Activated CD4-positive, alpha-beta T cell treated with anti-CD3 and anti-CD28 coated beads, Interleukin-2, amount 10 ng/mL, durations not matched to agents 24 days and 14 days (primary cell): ENCODE measurements at regions of chr9 and their contacts with region 1.

Region 1: GRCh38 chr9:112333639-112334431 is 416 bp upstream of the PTBP3 start:
- DNase-seq: peak; percentile 96
- H3K4me3 Mint-ChIP-seq: peak overlapping the region; percentile 92
- H3K27ac Mint-ChIP-seq: peak overlapping the region; percentile 99
- H3K4me1 Mint-ChIP-seq: peaks cover 28% of the 10 kb centered on the region
- H3K27me3 Mint-ChIP-seq: no peaks in the 10 kb centered on the region

Region 2: GRCh38 chr9:111661150-111661801 is 672.6 kb before region 1 on chr9 and contains the start of gene GNG10:
- intact Hi-C with region 1: loop called (anchors 1 kb)
- DNase-seq: peak; percentile 92
- H3K4me3 Mint-ChIP-seq: peak within 1 kb of the TSS; percentile 90
- H3K27ac Mint-ChIP-seq: peak within 1 kb of the TSS; percentile 97
- H3K4me1 Mint-ChIP-seq: peaks cover 28% of the 10 kb centered on the region
- H3K27me3 Mint-ChIP-seq: no peaks in the 10 kb centered on the region
- total RNA-seq, gene GNG10: 30.9 and 31.7 TPM in 2 replicates

Region 3: GRCh38 chr9:112180387-112180881 is 153.4 kb before region 1 on chr9:
- intact Hi-C with region 1: loop called (anchors 1 kb)
- DNase-seq: peak; percentile 88
- H3K4me3 Mint-ChIP-seq: peak overlapping the region; percentile 72
- H3K27ac Mint-ChIP-seq: peak overlapping the region; percentile 88
- H3K4me1 Mint-ChIP-seq: peaks cover 54% of the 10 kb centered on the region
- H3K27me3 Mint-ChIP-seq: peaks cover 9% of the 10 kb centered on the region

Region 4: GRCh38 chr9:112271466-112272092 is 62.3 kb before region 1 on chr9:
- intact Hi-C with region 1: no loop called
- DNase-seq: no peak
- H3K4me3 Mint-ChIP-seq: no peak overlapping the region
- H3K27ac Mint-ChIP-seq: no peak overlapping the region
- H3K4me1 Mint-ChIP-seq: peaks cover 19% of the 10 kb centered on the region
- H3K27me3 Mint-ChIP-seq: no peaks in the 10 kb centered on the region

Region 5: DNA sequence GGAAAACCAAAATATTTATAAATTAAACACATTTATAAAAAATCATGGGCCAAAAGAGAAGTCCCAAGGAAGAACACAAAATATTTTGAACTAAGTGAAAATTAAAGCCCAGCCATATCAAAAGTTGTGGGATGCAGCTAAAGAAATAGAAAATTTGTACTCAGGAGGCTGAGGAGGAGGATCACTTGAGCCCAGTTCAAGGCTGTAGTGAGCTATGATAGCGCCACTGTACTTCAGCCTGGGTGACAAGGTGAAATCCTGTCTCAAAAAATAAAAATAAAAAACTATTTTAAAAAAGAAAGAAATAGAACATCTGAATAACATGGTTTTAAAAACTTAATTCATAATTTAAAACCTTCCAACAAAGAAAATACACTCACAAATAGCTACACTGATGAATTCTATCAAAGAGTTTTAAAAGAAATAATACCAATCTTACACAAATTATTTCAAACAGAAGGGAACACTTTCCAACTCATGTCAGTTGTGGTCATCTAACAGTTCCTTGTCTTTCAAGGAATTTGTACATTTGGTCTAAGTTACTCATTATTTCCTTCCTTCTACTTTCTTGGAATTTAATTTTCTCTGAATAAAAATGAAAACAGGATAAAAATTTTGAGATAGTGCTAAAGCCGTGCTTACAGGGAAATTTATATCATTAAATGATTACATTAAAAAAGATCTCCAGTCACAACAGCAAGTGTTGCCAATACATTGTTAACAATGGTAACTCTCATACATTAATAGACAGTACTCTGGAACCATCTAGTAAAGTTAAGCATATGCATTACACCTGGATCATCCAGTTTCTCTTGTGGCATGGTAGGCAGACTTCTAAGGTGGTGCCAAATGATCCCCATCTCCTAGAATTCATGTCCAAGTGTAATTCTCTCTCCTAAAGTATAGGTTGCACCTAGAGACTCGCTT is 18.2 kb before region 1 on chr9:
- intact Hi-C with region 1: loop called (anchors 1 kb)
- DNase-seq: no peak
- H3K4me3 Mint-ChIP-seq: peak overlapping the region; percentile 49
- H3K27ac Mint-ChIP-seq: peak overlapping the region; percentile 78
- H3K4me1 Mint-ChIP-seq: peaks cover 46% of the 10 kb centered on the region
- H3K27me3 Mint-ChIP-seq: no peaks in the 10 kb centered on the region

Region 6: GRCh38 chr9:112486221-112487007 is 152.6 kb after region 1 on chr9 and contains the start of gene KIAA1958:
- intact Hi-C with region 1: loop called (anchors 1 kb)
- DNase-seq: peak; percentile 96
- H3K4me3 Mint-ChIP-seq: peak within 1 kb of the TSS; percentile 98
- H3K27ac Mint-ChIP-seq: peak within 1 kb of the TSS; percentile 98
- H3K4me1 Mint-ChIP-seq: peaks cover 28% of the 10 kb centered on the region
- H3K27me3 Mint-ChIP-seq: peaks cover 3% of the 10 kb centered on the region
- total RNA-seq, gene KIAA1958: 9.8 and 10.6 TPM in 2 replicates

Region 7: GRCh38 chr9:112831281-112831851 is 497.5 kb after region 1 on chr9:
- intact Hi-C with region 1: no loop called
- DNase-seq: no peak
- H3K4me3 Mint-ChIP-seq: no peak overlapping the region
- H3K27ac Mint-ChIP-seq: no peak overlapping the region
- H3K4me1 Mint-ChIP-seq: peaks cover 4% of the 10 kb centered on the region
- H3K27me3 Mint-ChIP-seq: no peaks in the 10 kb centered on the region

Region 8: GRCh38 chr9:113221003-113221799 is 887.4 kb after region 1 on chr9 and contains the starts of genes FKBP15 and SLC31A1:
- intact Hi-C with region 1: loop called (anchors 5 kb)
- DNase-seq: peak; percentile 99
- H3K4me3 Mint-ChIP-seq: peak within 1 kb of the TSS; percentile 94
- H3K27ac Mint-ChIP-seq: peak within 1 kb of the TSS; percentile 94
- H3K4me1 Mint-ChIP-seq: peaks cover 53% of the 10 kb centered on the region
- H3K27me3 Mint-ChIP-seq: no peaks in the 10 kb centered on the region
- total RNA-seq, gene FKBP15: 33.9 and 36.7 TPM in 2 replicates
- total RNA-seq, gene SLC31A1: 18.6 and 20.0 TPM in 2 replicates